Natural killer cell (primary cell): ENCODE measurements at regions of chr3 and their contacts with region 1.

Region 1: DNA sequence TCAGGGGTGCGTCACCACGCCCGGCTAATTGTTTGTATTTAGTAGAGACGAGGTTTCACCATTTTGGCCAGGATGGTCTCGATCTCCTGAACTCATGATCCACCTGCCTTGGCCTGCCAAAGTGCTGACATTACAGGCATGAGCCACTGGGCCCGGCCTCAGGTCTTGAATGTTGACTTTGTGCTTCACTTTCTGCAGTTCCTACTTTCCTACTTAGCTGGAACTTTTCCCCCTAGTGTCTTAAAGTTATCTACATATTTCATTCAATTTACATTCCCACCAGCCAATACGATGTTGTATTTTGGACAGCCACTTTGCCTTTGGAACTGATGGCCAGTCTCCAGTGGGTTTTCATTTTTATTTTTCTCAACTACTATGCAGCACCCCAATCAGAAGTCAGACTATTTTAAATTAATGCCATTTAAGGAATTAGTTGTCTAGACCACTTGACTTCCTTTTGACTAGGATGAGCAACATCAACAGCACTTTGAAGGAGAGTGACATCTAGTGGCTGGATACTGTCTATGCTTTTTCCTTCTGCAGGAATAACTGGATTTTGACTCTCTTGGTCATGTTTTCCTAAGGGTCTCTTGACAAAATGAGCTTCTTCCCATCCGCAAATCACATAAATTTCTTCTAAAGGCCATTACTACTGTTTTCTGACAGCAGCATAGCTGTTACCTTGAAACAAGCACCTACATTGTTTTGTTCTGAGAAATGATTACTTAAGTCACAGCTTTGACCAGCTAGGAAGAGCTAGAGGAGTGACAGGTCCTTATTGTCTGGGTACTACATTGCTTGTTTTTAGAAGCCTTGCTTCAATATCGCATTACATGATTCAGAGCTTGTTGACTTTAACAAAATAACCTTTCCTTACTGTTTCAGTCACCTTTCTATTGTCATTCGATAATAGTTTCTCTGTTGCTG is 140.2 kb downstream of the ITPR1 start:
- DNase-seq: peak in 1 of 2 donors; percentile 72
- ATAC-seq: peak; percentile 69 to 79 (median 76)
- H3K4me3 ChIP-seq: no peak overlapping the region
- H3K4me3 Mint-ChIP-seq: no peak overlapping the region
- H3K27ac ChIP-seq: no peak overlapping the region
- H3K27ac Mint-ChIP-seq: peak overlapping the region; percentile 16 to 63
- H3K4me1 ChIP-seq: no peaks in the 10 kb centered on the region
- H3K4me1 Mint-ChIP-seq: peaks cover 8 to 12% of the 10 kb centered on the region in 2 donors
- H3K27me3 ChIP-seq: no peaks in the 10 kb centered on the region
- H3K27me3 Mint-ChIP-seq: no peaks in the 10 kb centered on the region
- CTCF ChIP-seq: peak; percentile 76

Region 2: GRCh38 chr3:4449043-4449805 is 184.1 kb before region 1 on chr3:
- intact Hi-C with region 1: no loop called
- DNase-seq: no peak
- ATAC-seq: no peak
- H3K4me3 ChIP-seq: no peak overlapping the region
- H3K4me3 Mint-ChIP-seq: no peak overlapping the region
- H3K27ac ChIP-seq: no peak overlapping the region
- H3K27ac Mint-ChIP-seq: no peak overlapping the region
- H3K4me1 ChIP-seq: no peaks in the 10 kb centered on the region
- H3K4me1 Mint-ChIP-seq: no peaks in the 10 kb centered on the region
- H3K27me3 ChIP-seq: no peaks in the 10 kb centered on the region
- H3K27me3 Mint-ChIP-seq: no peaks in the 10 kb centered on the region
- CTCF ChIP-seq: no peak

Region 3: DNA sequence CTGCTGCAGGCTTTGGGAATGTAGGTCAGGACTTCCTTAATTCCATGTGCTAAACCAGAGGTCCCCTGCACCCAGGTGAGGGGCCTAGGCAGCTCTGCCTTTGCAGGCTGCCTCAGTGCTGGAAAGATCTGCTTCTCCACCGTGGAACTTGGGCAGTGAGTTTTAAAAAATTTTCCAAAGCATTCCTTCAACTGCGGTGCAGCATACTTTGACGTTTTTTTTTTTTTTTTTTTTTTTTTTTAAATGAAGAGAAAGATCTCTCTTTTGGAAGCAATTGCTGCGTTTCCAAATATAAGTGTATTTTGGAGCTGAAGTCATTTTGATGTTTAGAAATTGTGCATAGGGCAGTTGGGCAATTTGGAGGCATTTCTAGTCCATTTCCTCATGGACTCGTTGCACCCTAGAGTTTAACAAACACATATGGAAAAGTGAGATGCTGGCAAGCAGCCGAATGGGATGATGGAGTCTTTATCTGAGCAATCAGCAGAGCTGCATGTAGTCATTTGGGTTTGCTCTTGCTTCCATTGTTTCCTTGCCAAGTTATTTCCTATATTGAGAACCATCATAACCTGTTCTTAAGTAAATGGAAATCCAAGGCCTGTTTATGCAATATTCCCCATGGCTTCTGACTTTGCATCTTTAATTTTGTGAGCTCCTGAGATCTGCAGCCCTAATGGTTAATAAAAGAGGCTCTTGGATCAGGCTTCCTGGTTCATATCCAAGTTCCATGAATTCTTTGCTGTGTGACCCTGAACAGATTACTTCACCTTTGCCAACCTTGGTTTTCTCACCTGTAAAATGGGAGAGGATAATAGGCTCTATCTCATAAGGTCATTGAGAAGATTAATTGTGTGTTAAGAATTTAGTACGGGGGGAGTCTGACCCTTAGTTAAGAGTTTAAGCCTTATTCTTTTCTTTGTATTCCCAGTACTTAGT is 109.0 kb before region 1 on chr3:
- intact Hi-C with region 1: loop called (anchors 1 kb)
- DNase-seq: no peak
- ATAC-seq: no peak
- H3K4me3 ChIP-seq: no peak overlapping the region
- H3K4me3 Mint-ChIP-seq: no peak overlapping the region
- H3K27ac ChIP-seq: no peak overlapping the region
- H3K27ac Mint-ChIP-seq: no peak overlapping the region
- H3K4me1 ChIP-seq: peaks cover 4% of the 10 kb centered on the region
- H3K4me1 Mint-ChIP-seq: peaks cover 7 to 23% of the 10 kb centered on the region in 2 donors
- H3K27me3 ChIP-seq: no peaks in the 10 kb centered on the region
- H3K27me3 Mint-ChIP-seq: no peaks in the 10 kb centered on the region
- CTCF ChIP-seq: no peak